ENCODE measurements at regions of chr12 and their contacts with region 1.

Region 1: GRCh38 chr12:104358347-104359003 is 54.9 kb downstream of the EID3 start:
- DNase-seq: peak; percentile 68 to 76
- H3K4me3 ChIP-seq: no peak overlapping the region
- H3K27ac ChIP-seq: no peak overlapping the region
- H3K4me1 ChIP-seq: peaks cover 0 to 25% (median 3%) of the 10 kb centered on the region in 4 donors
- H3K27me3 ChIP-seq: no peaks in the 10 kb centered on the region
- CTCF ChIP-seq: peak; percentile 75 to 83

Region 2: DNA sequence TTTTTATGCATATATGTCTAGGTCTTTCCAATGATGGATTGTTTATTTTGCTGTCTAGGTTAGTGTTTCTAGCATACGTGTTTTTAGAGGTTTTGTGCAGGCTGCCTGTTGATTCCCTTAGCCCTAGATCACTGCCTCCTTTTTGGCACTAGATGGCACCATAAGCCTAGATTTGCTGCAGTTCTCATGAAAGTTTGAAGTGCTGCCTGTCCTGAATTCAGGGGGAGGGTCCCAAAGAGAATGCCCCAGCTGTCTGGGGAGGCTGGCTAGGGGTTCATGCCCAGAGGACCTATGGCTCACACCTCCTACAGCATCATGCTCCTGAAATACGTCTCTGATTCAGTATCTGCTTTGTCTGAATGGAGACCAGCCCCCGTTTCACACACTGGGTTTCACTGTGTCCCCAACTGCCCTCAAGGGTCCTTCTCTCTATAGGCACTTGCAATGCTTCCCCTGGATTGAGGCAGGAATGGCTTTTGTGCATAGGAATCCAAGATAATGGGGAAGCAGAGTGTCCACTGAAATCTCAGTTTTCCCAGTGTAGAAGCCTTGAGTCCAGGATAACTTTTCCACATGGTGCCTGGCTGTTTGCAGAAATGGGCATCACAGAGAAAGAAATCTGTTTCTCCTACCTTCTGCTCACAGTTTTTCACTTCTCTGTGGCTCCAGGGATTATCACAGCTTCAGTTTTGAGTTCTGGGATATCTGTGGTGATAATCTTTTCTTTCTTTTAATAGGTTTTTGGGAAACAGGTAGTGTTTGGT is 157.1 kb before region 1 on chr12:
- intact Hi-C with region 1: loop called (anchors 5 kb)
- DNase-seq: peak in 1 of 2 donors; percentile 37
- H3K4me3 ChIP-seq: no peak overlapping the region
- H3K27ac ChIP-seq: no peak overlapping the region
- H3K4me1 ChIP-seq: peaks cover 0 to 16% (median 7%) of the 10 kb centered on the region in 4 donors
- H3K27me3 ChIP-seq: no peaks in the 10 kb centered on the region
- CTCF ChIP-seq: peak; percentile 79 to 81

Region 3: GRCh38 chr12:104215638-104216297 is 142.7 kb before region 1 on chr12 and contains the start of gene TXNRD1:
- intact Hi-C with region 1: loop called (anchors 5 kb)
- DNase-seq: peak; percentile 83 to 90
- H3K4me3 ChIP-seq: peak within 1 kb of the TSS; percentile 70 to 82
- H3K27ac ChIP-seq: peak within 1 kb of the TSS; percentile 97
- H3K4me1 ChIP-seq: peaks cover 0 to 40% (median 16%) of the 10 kb centered on the region in 4 donors
- H3K27me3 ChIP-seq: no peaks in the 10 kb centered on the region
- CTCF ChIP-seq: peak; percentile 85 to 93